WTC11 (cell line): ENCODE measurements at regions of chr17 and their contacts with region 1.

Region 1: GRCh38 chr17:29589524-29590410 is at the start of gene GIT1:
- DNase-seq: peak; percentile 79
- ATAC-seq: peak; percentile 35
- H3K4me3 Mint-ChIP-seq: peak within 1 kb of the TSS; percentile 87
- H3K27ac Mint-ChIP-seq: no peak within 1 kb of the TSS
- H3K4me1 Mint-ChIP-seq: peaks cover 51% of the 10 kb centered on the region
- H3K27me3 Mint-ChIP-seq: peaks cover 4% of the 10 kb centered on the region; the same call in 1 of the 2 replicates
- CTCF ChIP-seq: no peak
- total RNA-seq, gene GIT1: 43.9 to 66.9 TPM (median 45.0 TPM) in 3 replicates

Region 2: GRCh38 chr17:29568331-29569244 is 21.2 kb before region 1 on chr17 and contains the start of gene TP53I13:
- CTCF ChIA-PET with region 1: interaction called, 65 read pairs
- POLR2A ChIA-PET with region 1: interaction called, 10 read pairs
- DNase-seq: peak; percentile 89
- ATAC-seq: peak; percentile 50
- H3K4me3 Mint-ChIP-seq: peak within 1 kb of the TSS; percentile 91
- H3K27ac Mint-ChIP-seq: peak within 1 kb of the TSS; percentile 95
- H3K4me1 Mint-ChIP-seq: peaks cover 16% of the 10 kb centered on the region
- H3K27me3 Mint-ChIP-seq: peaks cover 44% of the 10 kb centered on the region
- CTCF ChIP-seq: no peak
- total RNA-seq, gene TP53I13: 33.1 to 41.9 TPM (median 36.7 TPM) in 3 replicates

Region 3: DNA sequence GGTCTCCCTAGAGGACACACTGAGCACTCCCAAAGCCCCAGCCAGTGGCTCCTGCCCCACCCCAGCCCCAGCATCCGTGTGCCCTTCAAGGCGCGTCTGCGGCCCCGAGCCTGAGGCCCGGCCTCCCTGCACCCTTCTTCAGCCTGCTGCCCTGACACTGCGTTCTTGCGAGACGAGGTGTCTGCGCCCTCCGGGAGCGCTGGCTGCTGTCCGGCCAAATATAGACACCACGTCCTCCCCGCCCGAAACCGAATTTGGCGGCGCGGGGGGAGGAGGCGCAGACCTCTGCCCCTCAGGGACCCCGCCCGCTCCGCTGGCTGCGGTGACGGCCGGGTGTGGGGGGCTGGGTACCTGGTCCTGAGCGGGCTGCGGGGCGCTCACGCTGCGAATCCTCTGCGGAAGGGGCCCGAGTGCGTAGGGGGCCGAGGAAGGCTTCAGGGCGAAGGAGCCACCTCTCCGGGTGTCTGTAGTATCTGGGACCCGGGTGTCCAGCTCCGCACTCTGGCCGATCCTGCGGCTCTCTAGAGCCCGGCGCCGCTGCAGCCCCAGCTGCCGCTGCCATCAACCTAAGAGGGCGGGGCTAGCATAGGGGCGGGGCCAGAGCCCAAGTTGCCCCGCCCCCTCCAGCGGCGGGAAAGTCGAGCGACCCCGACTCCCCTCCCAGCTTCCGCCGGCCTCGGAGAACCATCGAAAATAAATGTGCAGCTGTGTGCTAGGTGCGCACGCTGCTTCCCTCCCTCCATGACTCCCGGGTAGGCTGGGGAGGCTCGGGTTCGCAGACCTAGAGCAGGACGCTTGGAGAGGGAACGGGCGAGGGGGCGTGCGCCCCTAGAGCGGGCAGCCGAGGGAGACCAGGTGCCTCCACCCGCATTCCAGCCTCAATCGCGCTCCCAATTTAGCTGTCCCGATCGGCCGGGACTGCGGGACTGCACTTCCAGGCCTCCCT is 32.8 kb after region 1 on chr17 and contains the start of gene CORO6:
- CTCF ChIA-PET with region 1: interaction called, 272 read pairs
- POLR2A ChIA-PET with region 1: interaction called, 12 read pairs
- DNase-seq: peak; percentile 86
- ATAC-seq: peak; percentile 58
- H3K4me3 Mint-ChIP-seq: peak within 1 kb of the TSS; percentile 79
- H3K27ac Mint-ChIP-seq: peak within 1 kb of the TSS; percentile 82
- H3K4me1 Mint-ChIP-seq: peaks cover 48% of the 10 kb centered on the region
- H3K27me3 Mint-ChIP-seq: peaks cover 65% of the 10 kb centered on the region
- CTCF ChIP-seq: no peak
- total RNA-seq, gene CORO6: 6.4 to 8.9 TPM (median 7.5 TPM) in 3 replicates